ENCODE measurements at regions of chr1 and their contacts with region 1.

Region 1: GRCh38 chr1:100400404-100400803 is 48.1 kb downstream of the CDC14A start:
- DNase-seq: peak in 8 of 9 donors; percentile 23 to 89 (median 84)
- ATAC-seq: peak; percentile 87
- H3K4me3 ChIP-seq: peak overlapping the region; percentile 46
- H3K4me3 Mint-ChIP-seq: peak overlapping the region; percentile 69 to 89 (median 81)
- H3K27ac ChIP-seq: peak overlapping the region; percentile 72
- H3K27ac Mint-ChIP-seq: peak overlapping the region; percentile 83 to 98 (median 96)
- H3K4me1 ChIP-seq: peaks cover 77 to 87% of the 10 kb centered on the region in 2 donors
- H3K4me1 Mint-ChIP-seq: peaks cover 59 to 98% (median 86%) of the 10 kb centered on the region in 7 donors
- H3K27me3 ChIP-seq: no peaks in the 10 kb centered on the region
- H3K27me3 Mint-ChIP-seq: no peaks in the 10 kb centered on the region

Region 2: GRCh38 chr1:100323419-100324106 is 76.8 kb before region 1 on chr1:
- CTCF ChIA-PET with region 1: no interaction called
- POLR2A ChIA-PET with region 1: no interaction called
- intact Hi-C with region 1: no loop called
- DNase-seq: no peak
- ATAC-seq: no peak
- H3K4me3 ChIP-seq: no peak overlapping the region
- H3K4me3 Mint-ChIP-seq: no peak overlapping the region
- H3K27ac ChIP-seq: no peak overlapping the region
- H3K27ac Mint-ChIP-seq: no peak overlapping the region
- H3K4me1 ChIP-seq: no peaks in the 10 kb centered on the region
- H3K4me1 Mint-ChIP-seq: peaks cover 0 to 12% (median 0%) of the 10 kb centered on the region in 7 donors
- H3K27me3 ChIP-seq: no peaks in the 10 kb centered on the region
- H3K27me3 Mint-ChIP-seq: no peaks in the 10 kb centered on the region

Region 3: DNA sequence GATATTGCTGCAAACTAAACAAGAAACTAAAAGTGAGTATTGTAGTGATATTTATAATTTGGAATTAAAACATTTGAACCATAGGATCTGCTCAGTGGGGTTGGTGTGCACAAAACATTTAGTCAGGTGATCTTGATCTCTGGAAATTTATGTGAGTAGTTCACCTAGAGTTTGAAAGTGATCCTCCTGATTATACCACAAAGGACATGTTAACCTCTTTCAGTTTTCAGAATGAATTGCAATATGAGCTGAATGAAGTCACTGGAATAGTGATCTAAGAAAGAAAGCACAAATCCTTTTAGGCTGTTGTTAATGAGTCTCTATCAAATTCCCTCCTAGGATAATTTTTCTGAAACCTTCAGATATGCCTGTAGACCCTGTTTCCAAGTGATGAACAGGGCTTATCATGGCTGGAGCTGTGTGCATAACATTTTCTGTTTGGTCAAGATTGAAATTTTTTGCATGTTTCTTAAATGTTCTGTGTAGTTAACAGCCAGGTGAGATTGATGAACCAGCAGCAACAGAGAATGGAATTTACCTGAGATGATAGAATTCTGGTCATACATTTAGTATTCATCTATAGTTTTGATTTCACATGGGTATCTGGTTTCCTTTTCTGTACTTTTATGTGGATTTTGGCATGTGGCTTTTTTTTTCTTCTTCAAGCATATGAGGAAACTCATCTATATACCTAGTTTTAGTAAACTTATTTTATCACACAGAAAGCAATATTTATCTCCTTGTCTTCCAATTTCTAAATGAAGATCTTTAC is 22.6 kb before region 1 on chr1:
- CTCF ChIA-PET with region 1: interaction called, 3 read pairs
- POLR2A ChIA-PET with region 1: interaction called, 3 read pairs
- intact Hi-C with region 1: loop called in 1 of 2 experiments (anchors 1 kb)
- DNase-seq: peak in 1 of 9 donors; percentile 28
- ATAC-seq: peak; percentile 68
- H3K4me3 ChIP-seq: no peak overlapping the region
- H3K4me3 Mint-ChIP-seq: peak overlapping the region in 9 of 10 donors; percentile 2 to 73 (median 61)
- H3K27ac ChIP-seq: peak overlapping the region; percentile 46
- H3K27ac Mint-ChIP-seq: peak overlapping the region in 8 of 9 donors; percentile 13 to 78 (median 74)
- H3K4me1 ChIP-seq: peaks cover 23 to 36% of the 10 kb centered on the region in 2 donors
- H3K4me1 Mint-ChIP-seq: peaks cover 41 to 92% (median 79%) of the 10 kb centered on the region in 7 donors
- H3K27me3 ChIP-seq: no peaks in the 10 kb centered on the region
- H3K27me3 Mint-ChIP-seq: no peaks in the 10 kb centered on the region

Region 4: GRCh38 chr1:100387209-100387608 is 13.2 kb before region 1 on chr1:
- CTCF ChIA-PET with region 1: interaction called, 6 read pairs
- POLR2A ChIA-PET with region 1: interaction called, 22 read pairs
- intact Hi-C with region 1: loop called in 1 of 2 experiments (anchors 1 kb)
- DNase-seq: no peak
- ATAC-seq: no peak
- H3K4me3 ChIP-seq: peak overlapping the region; percentile 9
- H3K4me3 Mint-ChIP-seq: peak overlapping the region; percentile 53 to 86 (median 78)
- H3K27ac ChIP-seq: peak overlapping the region; percentile 77
- H3K27ac Mint-ChIP-seq: peak overlapping the region; percentile 60 to 96 (median 92)
- H3K4me1 ChIP-seq: peaks cover 56 to 68% of the 10 kb centered on the region in 2 donors
- H3K4me1 Mint-ChIP-seq: peaks cover 39 to 99% (median 90%) of the 10 kb centered on the region in 7 donors
- H3K27me3 ChIP-seq: no peaks in the 10 kb centered on the region
- H3K27me3 Mint-ChIP-seq: no peaks in the 10 kb centered on the region

Region 5: DNA sequence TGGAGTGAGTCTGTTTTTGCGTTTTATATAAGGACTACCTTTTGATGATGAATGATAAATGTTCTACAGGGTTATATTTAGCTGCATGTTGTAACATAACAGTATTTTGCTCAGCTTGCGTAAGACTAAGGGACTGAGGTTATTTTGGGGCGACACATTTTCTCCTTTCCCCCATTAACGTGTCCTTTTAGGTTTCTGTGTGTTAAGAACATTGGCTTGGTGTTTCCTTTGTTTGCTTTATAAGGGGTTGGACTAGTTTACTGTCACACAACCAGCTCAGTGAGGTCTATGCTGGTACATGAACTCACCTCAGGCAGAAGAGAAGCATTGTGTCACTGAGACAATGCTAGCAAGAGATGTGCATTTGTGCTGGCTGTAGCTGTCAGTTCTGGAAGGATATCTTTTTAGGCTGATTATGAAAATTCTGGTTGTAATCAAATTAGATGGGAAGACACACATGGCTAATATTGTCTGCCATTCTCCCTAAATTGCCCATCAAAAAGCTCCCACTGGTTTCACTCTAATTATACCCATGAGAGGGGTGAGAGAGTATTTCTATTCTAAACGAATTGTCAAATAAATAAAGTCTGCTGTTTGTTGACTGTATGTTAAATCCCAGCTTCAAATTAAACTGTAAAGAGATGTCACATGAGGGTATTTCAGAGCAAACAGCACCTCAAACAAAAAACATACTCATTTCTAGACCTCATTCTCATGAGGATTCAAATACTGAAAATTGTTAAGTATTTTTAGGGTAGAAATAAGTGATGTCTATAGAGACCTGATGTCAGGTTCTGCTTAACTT is 14.5 kb after region 1 on chr1:
- CTCF ChIA-PET with region 1: interaction called, 5 read pairs
- POLR2A ChIA-PET with region 1: interaction called, 18 read pairs
- intact Hi-C with region 1: loop called in 1 of 2 experiments (anchors 1 kb)
- DNase-seq: peak in 2 of 9 donors; percentile 45 to 51
- ATAC-seq: peak; percentile 73
- H3K4me3 ChIP-seq: no peak overlapping the region
- H3K4me3 Mint-ChIP-seq: peak overlapping the region in 9 of 10 donors; percentile 0 to 72 (median 54)
- H3K27ac ChIP-seq: peak overlapping the region; percentile 44
- H3K27ac Mint-ChIP-seq: peak overlapping the region; percentile 16 to 92 (median 82)
- H3K4me1 ChIP-seq: peaks cover 46 to 57% of the 10 kb centered on the region in 2 donors
- H3K4me1 Mint-ChIP-seq: peaks cover 55 to 90% (median 81%) of the 10 kb centered on the region in 7 donors
- H3K27me3 ChIP-seq: no peaks in the 10 kb centered on the region
- H3K27me3 Mint-ChIP-seq: no peaks in the 10 kb centered on the region

Region 6: GRCh38 chr1:100423832-100424337 is 23.5 kb after region 1 on chr1:
- CTCF ChIA-PET with region 1: interaction called, 7 read pairs
- POLR2A ChIA-PET with region 1: interaction called, 23 read pairs
- intact Hi-C with region 1: loop called (anchors 1 to 2 kb)
- DNase-seq: peak in 4 of 9 donors; percentile 26 to 58 (median 52)
- ATAC-seq: peak; percentile 56
- H3K4me3 ChIP-seq: peak overlapping the region; percentile 41
- H3K4me3 Mint-ChIP-seq: peak overlapping the region; percentile 51 to 88 (median 80)
- H3K27ac ChIP-seq: peak overlapping the region; percentile 69
- H3K27ac Mint-ChIP-seq: peak overlapping the region; percentile 85 to 98 (median 92)
- H3K4me1 ChIP-seq: peaks cover 29 to 43% of the 10 kb centered on the region in 2 donors
- H3K4me1 Mint-ChIP-seq: peaks cover 31 to 92% (median 73%) of the 10 kb centered on the region in 7 donors
- H3K27me3 ChIP-seq: no peaks in the 10 kb centered on the region
- H3K27me3 Mint-ChIP-seq: no peaks in the 10 kb centered on the region

Region 7: DNA sequence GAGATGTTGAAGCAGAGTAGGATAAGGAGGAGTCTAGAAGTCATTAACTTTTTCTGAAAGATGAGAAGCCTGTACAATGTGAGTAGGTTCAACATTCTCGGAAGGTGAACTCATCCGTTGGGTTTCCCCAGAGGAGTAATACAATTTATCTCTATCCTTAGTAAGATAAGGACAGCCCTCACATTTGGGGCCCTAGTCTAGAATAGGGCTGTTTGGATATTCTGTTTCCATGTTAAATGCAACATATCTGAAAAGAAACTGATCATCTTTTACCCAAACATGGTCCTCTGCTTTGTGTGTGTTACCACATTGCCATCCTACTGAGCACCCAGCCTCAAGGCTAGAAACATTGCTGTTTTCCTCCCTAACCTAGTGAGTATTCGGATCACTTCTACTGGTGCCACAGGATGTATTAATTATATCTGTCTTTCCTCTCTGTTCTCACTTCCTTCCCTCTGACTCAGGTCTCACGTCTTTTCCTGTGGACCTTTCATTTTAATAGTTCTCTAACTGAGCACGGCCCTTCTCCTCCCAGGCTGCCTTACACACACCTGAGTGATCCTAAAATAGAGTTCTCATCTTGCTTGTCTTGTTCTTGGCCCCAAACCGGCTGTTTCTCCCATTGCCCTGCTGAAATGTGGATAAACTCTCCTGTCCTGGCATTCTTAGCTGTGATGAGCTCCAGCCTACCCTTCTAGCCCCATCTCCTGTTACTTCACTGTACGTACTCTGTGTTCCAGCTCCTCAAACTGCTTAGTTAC is 43.6 kb after region 1 on chr1:
- CTCF ChIA-PET with region 1: interaction called, 4 read pairs
- POLR2A ChIA-PET with region 1: interaction called, 9 read pairs
- intact Hi-C with region 1: loop called (anchors 1 kb)
- DNase-seq: peak in 5 of 9 donors; percentile 31 to 42 (median 36)
- ATAC-seq: peak; percentile 6
- H3K4me3 ChIP-seq: peak overlapping the region; percentile 12
- H3K4me3 Mint-ChIP-seq: peak overlapping the region; percentile 66 to 86 (median 81)
- H3K27ac ChIP-seq: peak overlapping the region; percentile 93
- H3K27ac Mint-ChIP-seq: peak overlapping the region; percentile 92 to 99 (median 98)
- H3K4me1 ChIP-seq: peaks cover 83 to 84% of the 10 kb centered on the region in 2 donors
- H3K4me1 Mint-ChIP-seq: peaks cover 53 to 95% (median 87%) of the 10 kb centered on the region in 7 donors
- H3K27me3 ChIP-seq: no peaks in the 10 kb centered on the region
- H3K27me3 Mint-ChIP-seq: no peaks in the 10 kb centered on the region

Region 8: DNA sequence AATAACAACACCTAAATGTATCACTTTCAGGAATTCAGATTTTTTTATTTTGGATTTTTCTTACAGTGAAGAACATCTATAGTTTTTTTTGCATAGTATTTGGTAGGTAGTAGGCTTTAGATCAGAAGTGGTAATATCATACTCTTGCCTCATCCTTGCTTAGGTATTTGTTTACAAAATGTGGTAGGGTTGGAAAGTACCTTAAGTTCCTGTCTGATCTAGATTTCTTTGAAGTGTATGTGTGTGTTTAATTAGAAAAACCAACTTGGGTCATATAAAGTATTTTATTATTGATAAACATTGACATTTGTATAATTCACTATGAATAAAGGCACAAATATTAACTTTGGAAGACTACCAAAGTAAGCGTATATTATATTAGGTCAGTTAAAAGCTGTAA is 52.2 kb after region 1 on chr1:
- CTCF ChIA-PET with region 1: interaction called, 4 read pairs
- POLR2A ChIA-PET with region 1: interaction called, 14 read pairs
- intact Hi-C with region 1: loop called (anchors 1 to 2 kb)
- DNase-seq: peak in 7 of 9 donors; percentile 41 to 81 (median 64)
- ATAC-seq: peak; percentile 95
- H3K4me3 ChIP-seq: no peak overlapping the region
- H3K4me3 Mint-ChIP-seq: peak overlapping the region; percentile 20 to 63 (median 50)
- H3K27ac ChIP-seq: peak overlapping the region; percentile 80
- H3K27ac Mint-ChIP-seq: peak overlapping the region; percentile 79 to 99 (median 93)
- H3K4me1 ChIP-seq: peaks cover 55 to 59% of the 10 kb centered on the region in 2 donors
- H3K4me1 Mint-ChIP-seq: peaks cover 29 to 92% (median 84%) of the 10 kb centered on the region in 7 donors
- H3K27me3 ChIP-seq: no peaks in the 10 kb centered on the region
- H3K27me3 Mint-ChIP-seq: no peaks in the 10 kb centered on the region

Region 9: GRCh38 chr1:100485855-100486258 is 85.5 kb after region 1 on chr1:
- CTCF ChIA-PET with region 1: no interaction called
- POLR2A ChIA-PET with region 1: no interaction called
- intact Hi-C with region 1: no loop called
- DNase-seq: no peak
- ATAC-seq: no peak
- H3K4me3 ChIP-seq: no peak overlapping the region
- H3K4me3 Mint-ChIP-seq: no peak overlapping the region
- H3K27ac ChIP-seq: no peak overlapping the region
- H3K27ac Mint-ChIP-seq: no peak overlapping the region
- H3K4me1 ChIP-seq: no peaks in the 10 kb centered on the region
- H3K4me1 Mint-ChIP-seq: peaks cover 0 to 15% (median 0%) of the 10 kb centered on the region in 7 donors
- H3K27me3 ChIP-seq: no peaks in the 10 kb centered on the region
- H3K27me3 Mint-ChIP-seq: no peaks in the 10 kb centered on the region

Region 10: DNA sequence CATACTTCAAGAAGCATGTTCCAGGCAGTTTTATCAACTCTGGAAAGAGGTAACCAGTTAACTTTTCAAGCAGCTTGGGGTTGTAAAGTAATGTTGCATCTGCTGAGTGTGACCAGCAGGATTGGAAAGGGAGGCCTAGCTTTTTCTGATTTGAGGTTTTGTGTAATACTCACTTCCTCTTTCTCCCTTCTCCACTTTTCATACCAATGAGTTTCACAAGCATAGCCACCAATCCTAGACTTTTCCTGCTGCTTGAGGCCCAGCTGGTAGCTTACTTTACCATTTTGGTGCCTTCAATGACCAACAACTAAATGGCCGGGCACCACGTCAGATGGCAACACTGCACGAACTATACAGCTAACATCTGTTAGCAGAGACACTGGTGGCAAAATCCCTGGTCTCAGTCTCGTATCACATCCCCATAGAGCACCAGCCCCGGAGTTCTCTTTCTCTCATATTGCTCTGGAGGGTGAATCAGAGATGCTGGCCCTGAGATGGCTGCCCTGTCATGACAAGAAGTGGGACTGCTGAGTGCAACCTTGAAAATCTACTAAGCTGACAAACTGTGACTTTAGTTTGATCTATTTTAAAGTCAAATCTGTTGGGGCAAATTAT is 122.7 kb after region 1 on chr1:
- CTCF ChIA-PET with region 1: no interaction called
- POLR2A ChIA-PET with region 1: no interaction called
- intact Hi-C with region 1: no loop called
- DNase-seq: no peak
- ATAC-seq: peak; percentile 60
- H3K4me3 ChIP-seq: no peak overlapping the region
- H3K4me3 Mint-ChIP-seq: no peak overlapping the region
- H3K27ac ChIP-seq: no peak overlapping the region
- H3K27ac Mint-ChIP-seq: peak overlapping the region in 5 of 9 donors; percentile 9 to 72 (median 38)
- H3K4me1 ChIP-seq: no peaks in the 10 kb centered on the region
- H3K4me1 Mint-ChIP-seq: peaks cover 0 to 7% (median 0%) of the 10 kb centered on the region in 7 donors
- H3K27me3 ChIP-seq: no peaks in the 10 kb centered on the region
- H3K27me3 Mint-ChIP-seq: peaks cover 0 to 12% (median 0%) of the 10 kb centered on the region in 5 donors

Region 11: GRCh38 chr1:101178688-101179491 is 778.5 kb after region 1 on chr1:
- CTCF ChIA-PET with region 1: no interaction called
- POLR2A ChIA-PET with region 1: no interaction called
- intact Hi-C with region 1: no loop called
- DNase-seq: peak in 7 of 9 donors; percentile 40 to 61 (median 46)
- ATAC-seq: peak; percentile 78
- H3K4me3 ChIP-seq: peak overlapping the region; percentile 3
- H3K4me3 Mint-ChIP-seq: peak overlapping the region; percentile 63 to 90 (median 80)
- H3K27ac ChIP-seq: peak overlapping the region; percentile 60
- H3K27ac Mint-ChIP-seq: peak overlapping the region; percentile 86 to 98 (median 92)
- H3K4me1 ChIP-seq: peaks cover 12 to 20% of the 10 kb centered on the region in 2 donors
- H3K4me1 Mint-ChIP-seq: peaks cover 24 to 69% (median 51%) of the 10 kb centered on the region in 7 donors
- H3K27me3 ChIP-seq: no peaks in the 10 kb centered on the region
- H3K27me3 Mint-ChIP-seq: no peaks in the 10 kb centered on the region